ENCODE measurements at regions of chr5 and their contacts with region 1.

Region 1: GRCh38 chr5:164412531-164412930 is 907.1 kb downstream of the MAT2B start:
- DNase-seq: no peak
- ATAC-seq: no peak
- H3K4me3 ChIP-seq: no peak overlapping the region
- H3K27ac ChIP-seq: no peak overlapping the region
- H3K4me1 ChIP-seq: no peaks in the 10 kb centered on the region
- H3K27me3 ChIP-seq: no peaks in the 10 kb centered on the region
- CTCF ChIP-seq: no peak
- EP300 ChIP-seq: no peak
- POLR2A ChIP-seq: no peak
- RAD21 ChIP-seq: no peak

Region 2: GRCh38 chr5:164345173-164345849 is 67.2 kb before region 1 on chr5:
- CTCF ChIA-PET with region 1: no interaction called
- POLR2A ChIA-PET with region 1: no interaction called
- in situ Hi-C with region 1: no loop called
- intact Hi-C with region 1: loop called (anchors 5 kb)
- DNase-seq: peak in 1 of 4 experiments; percentile 14
- ATAC-seq: peak; percentile 15; the same call in 2 of the 3 replicates
- H3K4me3 ChIP-seq: no peak overlapping the region
- H3K27ac ChIP-seq: peak overlapping the region; percentile 73; the same call in 2 of the 3 replicates
- H3K4me1 ChIP-seq: peaks cover 3 to 39% of the 10 kb centered on the region in 2 experiments; a peak in 3 of 5 replicates
- H3K27me3 ChIP-seq: no peaks in the 10 kb centered on the region
- CTCF ChIP-seq: no peak
- EP300 ChIP-seq: no peak
- POLR2A ChIP-seq: no peak
- RAD21 ChIP-seq: no peak